ENCODE measurements at regions of chr4 and their contacts with region 1.

Region 1: GRCh38 chr4:23135792-23136645 is 443.3 kb downstream of the GBA3 start:
- DNase-seq: no peak
- H3K4me3 ChIP-seq: no peak overlapping the region
- H3K27ac ChIP-seq: no peak overlapping the region
- H3K4me1 ChIP-seq: peaks cover 0 to 4% (median 2%) of the 10 kb centered on the region in 4 experiments; a peak in 3 of 7 replicates
- H3K27me3 ChIP-seq: no peaks in the 10 kb centered on the region
- CTCF ChIP-seq: peak in 2 of 3 experiments; percentile 57 to 67; a peak in 2 of 4 replicates
- EP300 ChIP-seq: no peak
- POLR2A ChIP-seq: no peak
- RAD21 ChIP-seq: peak; percentile 72 to 79

Region 2: GRCh38 chr4:22877486-22878052 is 258.4 kb before region 1 on chr4:
- CTCF ChIA-PET with region 1: no interaction called
- POLR2A ChIA-PET with region 1: no interaction called
- DNase-seq: no peak
- H3K4me3 ChIP-seq: no peak overlapping the region
- H3K27ac ChIP-seq: no peak overlapping the region
- H3K4me1 ChIP-seq: no peaks in the 10 kb centered on the region
- H3K27me3 ChIP-seq: no peaks in the 10 kb centered on the region
- CTCF ChIP-seq: no peak
- EP300 ChIP-seq: no peak
- POLR2A ChIP-seq: no peak
- RAD21 ChIP-seq: no peak

Region 3: GRCh38 chr4:23153076-23153475 is 17.1 kb after region 1 on chr4:
- CTCF ChIA-PET with region 1: interaction called, 18 read pairs
- POLR2A ChIA-PET with region 1: no interaction called
- DNase-seq: no peak
- H3K4me3 ChIP-seq: no peak overlapping the region
- H3K27ac ChIP-seq: no peak overlapping the region
- H3K4me1 ChIP-seq: peaks cover 0 to 4% (median 0%) of the 10 kb centered on the region in 4 experiments; a peak in 3 of 7 replicates
- H3K27me3 ChIP-seq: no peaks in the 10 kb centered on the region
- CTCF ChIP-seq: no peak
- EP300 ChIP-seq: no peak
- POLR2A ChIP-seq: no peak
- RAD21 ChIP-seq: no peak